Left cardiac atrium (tissue), 4 donors: ENCODE measurements at regions of chr12 and their contacts with region 1.

Region 1: DNA sequence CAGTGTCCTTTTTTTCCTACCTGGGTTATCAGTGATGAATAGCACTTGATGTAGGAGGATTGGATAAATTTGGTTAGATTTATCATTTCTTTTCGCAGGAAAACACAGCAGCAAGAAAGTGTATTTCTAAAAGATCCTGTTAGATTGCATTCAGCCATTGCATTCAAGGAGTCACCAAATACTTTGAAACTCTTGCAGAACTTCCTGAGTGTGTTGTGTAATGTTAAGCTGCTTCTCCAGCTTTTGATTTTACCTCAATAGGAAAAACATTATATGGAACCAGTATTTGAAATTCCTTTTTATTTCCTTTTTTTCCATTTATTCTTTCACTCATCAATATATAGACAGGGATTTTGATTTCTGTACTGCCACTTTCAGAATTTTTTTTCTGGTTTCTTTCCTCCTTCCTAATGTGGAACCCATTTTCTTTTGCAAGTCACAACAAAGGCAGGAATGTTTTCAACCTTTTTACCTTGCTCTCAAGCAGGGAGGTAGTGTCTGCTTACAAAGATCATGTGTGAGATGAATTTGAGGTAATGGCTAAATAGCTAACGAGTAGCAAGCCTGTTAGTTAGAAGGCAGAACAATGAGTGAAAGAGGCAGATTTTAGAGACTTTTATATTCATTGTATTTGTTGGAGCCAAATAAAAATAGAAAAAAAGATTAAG is 56.2 kb downstream of the PPHLN1 start:
- DNase-seq: no peak
- ATAC-seq: no peak

Region 2: DNA sequence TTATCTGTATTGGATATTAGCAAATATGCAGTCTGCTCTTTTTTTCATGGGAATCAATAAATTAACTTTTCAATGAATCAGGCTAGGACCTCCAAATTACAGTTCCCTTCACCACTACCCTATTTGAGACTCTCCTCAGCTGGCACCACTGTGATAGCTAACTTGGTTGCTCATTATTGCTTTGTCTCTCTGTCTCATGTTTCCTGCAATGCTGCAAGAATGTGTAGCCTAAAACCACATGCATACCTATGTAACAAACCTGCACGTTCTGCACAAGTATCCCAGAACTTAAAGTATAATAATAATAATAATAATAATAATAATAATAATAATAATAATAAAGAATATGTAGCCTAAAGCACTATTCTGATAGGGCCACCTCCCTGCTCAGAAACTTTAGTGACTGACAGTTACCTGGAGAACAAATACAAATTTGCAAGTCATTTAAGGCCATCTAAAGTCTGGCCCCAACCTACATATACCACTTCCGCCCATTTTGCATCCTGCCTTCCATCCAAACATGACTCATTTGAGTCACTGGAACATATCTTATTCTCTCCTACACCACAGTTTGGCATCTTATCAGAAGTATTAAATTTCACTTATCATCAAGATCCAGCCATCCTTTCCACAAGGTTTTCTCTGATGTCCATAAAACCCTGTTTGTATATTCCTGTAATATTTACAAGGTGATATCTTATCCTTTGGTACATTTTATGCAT is 1942.2 kb before region 1 on chr12:
- intact Hi-C with region 1: no loop called
- DNase-seq: no peak
- ATAC-seq: no peak

Region 3: GRCh38 chr12:42568952-42569915 is 187.1 kb after region 1 on chr12:
- intact Hi-C with region 1: loop called in 1 of 2 experiments (anchors 10 kb)
- DNase-seq: no peak
- ATAC-seq: peak; percentile 70 to 72